ENCODE measurements at regions of chr6 and their contacts with region 1.

Region 1: GRCh38 chr6:151675746-151676416 is 131.6 kb upstream of the ESR1 start:
- DNase-seq: peak; percentile 64
- ATAC-seq: peak; percentile 86
- H3K4me3 Mint-ChIP-seq: no peak overlapping the region
- H3K27ac Mint-ChIP-seq: no peak overlapping the region
- H3K4me1 Mint-ChIP-seq: peaks cover 7% of the 10 kb centered on the region
- H3K27me3 Mint-ChIP-seq: no peaks in the 10 kb centered on the region
- CTCF ChIP-seq: peak; percentile 93

Region 2: GRCh38 chr6:152267967-152268845 is 592.3 kb after region 1 on chr6:
- CTCF ChIA-PET with region 1: no interaction called
- POLR2A ChIA-PET with region 1: no interaction called
- intact Hi-C with region 1: loop called (anchors 10 kb)
- DNase-seq: peak; percentile 50
- ATAC-seq: no peak
- H3K4me3 Mint-ChIP-seq: no peak overlapping the region
- H3K27ac Mint-ChIP-seq: no peak overlapping the region
- H3K4me1 Mint-ChIP-seq: peaks cover 9% of the 10 kb centered on the region
- H3K27me3 Mint-ChIP-seq: no peaks in the 10 kb centered on the region
- CTCF ChIP-seq: peak; percentile 72

Measured in activated CD8-positive, alpha-beta T cell treated with anti-CD3 and anti-CD28 coated beads for 36 hours (primary cell).